Tibial artery (tissue), 4 donors: ENCODE measurements at regions of chr17 and their contacts with region 1.

Region 1: GRCh38 chr17:60036796-60037612 is 41.7 kb downstream of the HEATR6 start:
- DNase-seq: peak; percentile 49 to 71
- H3K4me3 ChIP-seq: no peak overlapping the region
- H3K27ac ChIP-seq: no peak overlapping the region
- H3K4me1 ChIP-seq: peaks cover 0 to 8% (median 3%) of the 10 kb centered on the region in 4 donors
- H3K27me3 ChIP-seq: peaks cover 0 to 13% of the 10 kb centered on the region in 2 donors
- CTCF ChIP-seq: peak; percentile 76 to 85

Region 2: DNA sequence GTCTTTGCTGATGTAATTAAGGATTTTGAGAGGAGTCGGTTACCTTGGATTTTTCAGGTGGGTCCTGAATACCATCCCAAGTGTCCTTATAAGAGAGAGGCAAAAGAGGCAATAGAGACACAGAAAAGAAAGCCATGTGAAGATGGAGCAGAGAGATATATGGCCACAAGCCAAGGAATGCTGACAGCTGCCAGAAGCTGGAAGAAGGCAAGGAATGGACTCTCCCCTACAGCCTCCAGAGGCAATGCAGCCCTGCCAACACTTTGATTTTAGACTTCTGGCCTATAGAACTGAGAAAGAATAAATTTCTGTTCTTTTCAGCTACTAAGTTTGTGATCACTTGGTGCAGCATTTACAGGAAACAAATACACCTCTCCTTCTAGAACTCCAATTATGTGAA is 64.2 kb before region 1 on chr17:
- intact Hi-C with region 1: loop called (anchors 5 kb)
- DNase-seq: no peak
- H3K4me3 ChIP-seq: no peak overlapping the region
- H3K27ac ChIP-seq: no peak overlapping the region
- H3K4me1 ChIP-seq: no peaks in the 10 kb centered on the region
- H3K27me3 ChIP-seq: no peaks in the 10 kb centered on the region
- CTCF ChIP-seq: no peak

Region 3: GRCh38 chr17:60127068-60128054 is 90.4 kb after region 1 on chr17:
- intact Hi-C with region 1: no loop called
- DNase-seq: no peak
- H3K4me3 ChIP-seq: no peak overlapping the region
- H3K27ac ChIP-seq: no peak overlapping the region
- H3K4me1 ChIP-seq: no peaks in the 10 kb centered on the region
- H3K27me3 ChIP-seq: peaks cover 0 to 12% of the 10 kb centered on the region in 2 donors
- CTCF ChIP-seq: no peak

Region 4: DNA sequence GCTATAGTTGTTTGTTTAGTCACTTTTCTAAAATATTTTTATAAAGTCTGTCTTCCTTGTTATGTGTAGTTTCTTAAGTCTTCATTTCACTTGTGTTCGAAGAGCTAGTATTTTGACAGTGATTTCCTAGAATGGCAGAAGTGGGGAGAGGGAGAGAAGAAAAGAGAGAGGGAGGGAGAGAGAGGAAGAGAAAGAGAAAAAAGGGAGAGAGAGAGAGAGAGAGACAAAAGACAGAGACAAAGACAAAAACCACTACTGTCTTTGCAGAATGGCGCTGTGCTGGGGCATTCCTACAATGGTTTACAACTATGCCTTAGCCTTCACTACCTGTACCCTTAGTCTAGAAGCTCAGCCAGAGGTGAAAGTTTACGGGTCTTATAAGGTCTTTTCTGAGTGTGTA is 203.3 kb after region 1 on chr17:
- intact Hi-C with region 1: no loop called
- DNase-seq: no peak
- H3K4me3 ChIP-seq: no peak overlapping the region
- H3K27ac ChIP-seq: no peak overlapping the region
- H3K4me1 ChIP-seq: no peaks in the 10 kb centered on the region
- H3K27me3 ChIP-seq: no peaks in the 10 kb centered on the region
- CTCF ChIP-seq: no peak

Region 5: DNA sequence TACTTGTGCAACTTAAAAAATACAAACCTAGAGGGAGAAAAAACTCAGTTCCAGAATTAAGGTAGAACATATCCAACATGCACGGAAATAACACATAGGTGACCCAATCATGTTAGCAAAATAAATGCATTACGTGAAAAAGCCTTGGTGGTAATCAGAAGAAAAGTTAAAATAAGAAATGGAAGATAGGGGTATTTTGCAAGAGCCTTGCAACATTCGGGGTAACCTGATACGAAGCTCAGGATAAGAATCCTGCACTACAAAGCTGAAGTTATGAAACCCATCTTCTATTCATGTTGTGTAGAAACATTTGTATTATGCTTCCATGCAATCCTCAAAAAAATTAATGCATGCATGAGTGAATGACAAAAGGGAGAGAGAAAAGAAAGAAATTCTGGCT is 418.4 kb after region 1 on chr17:
- intact Hi-C with region 1: no loop called
- DNase-seq: no peak
- H3K4me3 ChIP-seq: no peak overlapping the region
- H3K27ac ChIP-seq: no peak overlapping the region
- H3K4me1 ChIP-seq: no peaks in the 10 kb centered on the region
- H3K27me3 ChIP-seq: no peaks in the 10 kb centered on the region
- CTCF ChIP-seq: no peak